PC-3 (cell line): ENCODE measurements at regions of chr11 and their contacts with region 1.

Region 1: GRCh38 chr11:13868710-13869397 is 93.7 kb upstream of the SPON1 start:
- DNase-seq: peak; percentile 86
- ATAC-seq: peak; percentile 65
- H3K4me3 ChIP-seq: no peak overlapping the region
- H3K27ac ChIP-seq: peak overlapping the region; percentile 90
- H3K4me1 ChIP-seq: peaks cover 19% of the 10 kb centered on the region
- H3K27me3 ChIP-seq: no peaks in the 10 kb centered on the region
- CTCF ChIP-seq: no peak

Region 2: GRCh38 chr11:13668102-13668956 is 200.5 kb before region 1 on chr11 and contains the start of gene FAR1:
- CTCF ChIA-PET with region 1: no interaction called
- POLR2A ChIA-PET with region 1: no interaction called
- intact Hi-C with region 1: loop called (anchors 10 kb)
- DNase-seq: peak; percentile 98
- ATAC-seq: peak; percentile 86
- H3K4me3 ChIP-seq: peak within 1 kb of the TSS; percentile 92
- H3K27ac ChIP-seq: peak within 1 kb of the TSS; percentile 28; the same call in 1 of the 2 replicates
- H3K4me1 ChIP-seq: peaks cover 28% of the 10 kb centered on the region
- H3K27me3 ChIP-seq: no peaks in the 10 kb centered on the region
- CTCF ChIP-seq: peak; percentile 54
- total RNA-seq, gene FAR1: 31.6 and 45.6 TPM in 2 replicates

Region 3: GRCh38 chr11:13772223-13773046 is 96.4 kb before region 1 on chr11:
- CTCF ChIA-PET with region 1: no interaction called
- POLR2A ChIA-PET with region 1: no interaction called
- intact Hi-C with region 1: loop called (anchors 2 kb)
- DNase-seq: peak; percentile 76
- ATAC-seq: peak; percentile 67
- H3K4me3 ChIP-seq: no peak overlapping the region
- H3K27ac ChIP-seq: no peak overlapping the region
- H3K4me1 ChIP-seq: no peaks in the 10 kb centered on the region
- H3K27me3 ChIP-seq: no peaks in the 10 kb centered on the region
- CTCF ChIP-seq: peak; percentile 80

Region 4: GRCh38 chr11:13837286-13837685 is 31.6 kb before region 1 on chr11:
- CTCF ChIA-PET with region 1: interaction called, 3 read pairs
- POLR2A ChIA-PET with region 1: no interaction called
- intact Hi-C with region 1: loop called (anchors 1 kb)
- DNase-seq: peak; percentile 94
- ATAC-seq: peak; percentile 88
- H3K4me3 ChIP-seq: no peak overlapping the region
- H3K27ac ChIP-seq: peak overlapping the region; percentile 95
- H3K4me1 ChIP-seq: peaks cover 35% of the 10 kb centered on the region
- H3K27me3 ChIP-seq: no peaks in the 10 kb centered on the region
- CTCF ChIP-seq: no peak

Region 5: GRCh38 chr11:13955971-13956421 is 87.1 kb after region 1 on chr11:
- CTCF ChIA-PET with region 1: no interaction called
- POLR2A ChIA-PET with region 1: no interaction called
- intact Hi-C with region 1: loop called (anchors 1 kb)
- DNase-seq: peak; percentile 76
- ATAC-seq: peak; percentile 53; the same call in 1 of the 2 replicates
- H3K4me3 ChIP-seq: no peak overlapping the region
- H3K27ac ChIP-seq: no peak overlapping the region
- H3K4me1 ChIP-seq: peaks cover 5% of the 10 kb centered on the region; the same call in 1 of the 2 replicates
- H3K27me3 ChIP-seq: peaks cover 7% of the 10 kb centered on the region; the same call in 1 of the 2 replicates
- CTCF ChIP-seq: peak; percentile 89

Region 6: GRCh38 chr11:14041040-14041439 is 172.2 kb after region 1 on chr11:
- CTCF ChIA-PET with region 1: no interaction called
- POLR2A ChIA-PET with region 1: no interaction called
- intact Hi-C with region 1: loop called (anchors 2 kb)
- DNase-seq: peak; percentile 46
- ATAC-seq: peak; percentile 58; the same call in 1 of the 2 replicates
- H3K4me3 ChIP-seq: no peak overlapping the region
- H3K27ac ChIP-seq: no peak overlapping the region
- H3K4me1 ChIP-seq: peaks cover 9% of the 10 kb centered on the region; the same call in 1 of the 2 replicates
- H3K27me3 ChIP-seq: peaks cover 6% of the 10 kb centered on the region; the same call in 1 of the 2 replicates
- CTCF ChIP-seq: peak; percentile 70

Region 7: DNA sequence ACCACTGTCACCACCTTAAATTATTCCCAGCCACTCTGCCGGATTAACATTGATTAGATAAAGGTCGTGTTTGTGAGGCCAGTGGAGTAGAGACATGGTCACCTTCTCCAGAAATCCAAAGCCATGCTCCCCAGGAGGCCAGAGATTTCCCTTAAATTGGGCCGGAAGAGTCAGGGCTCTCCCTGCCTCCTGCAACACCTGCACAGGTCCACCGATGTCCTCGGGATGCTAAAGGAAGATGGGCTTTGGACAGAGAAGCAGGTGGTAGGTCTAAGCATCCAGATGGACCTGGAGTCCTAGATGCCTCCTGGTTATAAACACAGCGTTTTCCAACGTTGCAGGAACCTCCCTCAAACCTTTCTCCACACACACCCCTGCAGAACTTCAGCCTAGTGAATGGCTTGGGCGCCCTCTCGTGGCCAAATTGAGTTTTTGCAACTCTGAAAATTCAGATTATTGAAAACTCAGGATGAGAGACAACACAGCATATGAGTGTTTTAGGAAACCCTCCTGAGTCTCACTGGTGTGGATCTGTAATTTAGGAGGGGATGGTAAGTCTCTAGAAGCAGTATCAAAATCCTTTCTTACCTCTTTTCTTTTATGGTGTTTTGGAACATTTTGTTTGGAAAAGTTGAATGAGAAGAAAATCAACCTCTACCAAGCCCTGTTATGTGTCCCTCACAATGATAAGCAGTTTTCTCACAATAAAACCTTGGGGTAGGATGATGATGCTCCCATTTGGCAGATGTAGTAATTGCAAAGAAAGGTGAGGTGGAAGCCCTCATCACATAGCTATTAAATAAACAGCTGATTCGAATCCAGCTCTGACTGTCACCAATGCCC is 380.5 kb after region 1 on chr11:
- CTCF ChIA-PET with region 1: no interaction called
- POLR2A ChIA-PET with region 1: no interaction called
- intact Hi-C with region 1: loop called (anchors 2 kb)
- DNase-seq: peak; percentile 77
- ATAC-seq: peak; percentile 77
- H3K4me3 ChIP-seq: no peak overlapping the region
- H3K27ac ChIP-seq: no peak overlapping the region
- H3K4me1 ChIP-seq: no peaks in the 10 kb centered on the region
- H3K27me3 ChIP-seq: no peaks in the 10 kb centered on the region
- CTCF ChIP-seq: peak; percentile 94